CD8-positive, alpha-beta memory T cell (primary cell): ENCODE measurements at regions of chr10 and their contacts with region 1.

Region 1: DNA sequence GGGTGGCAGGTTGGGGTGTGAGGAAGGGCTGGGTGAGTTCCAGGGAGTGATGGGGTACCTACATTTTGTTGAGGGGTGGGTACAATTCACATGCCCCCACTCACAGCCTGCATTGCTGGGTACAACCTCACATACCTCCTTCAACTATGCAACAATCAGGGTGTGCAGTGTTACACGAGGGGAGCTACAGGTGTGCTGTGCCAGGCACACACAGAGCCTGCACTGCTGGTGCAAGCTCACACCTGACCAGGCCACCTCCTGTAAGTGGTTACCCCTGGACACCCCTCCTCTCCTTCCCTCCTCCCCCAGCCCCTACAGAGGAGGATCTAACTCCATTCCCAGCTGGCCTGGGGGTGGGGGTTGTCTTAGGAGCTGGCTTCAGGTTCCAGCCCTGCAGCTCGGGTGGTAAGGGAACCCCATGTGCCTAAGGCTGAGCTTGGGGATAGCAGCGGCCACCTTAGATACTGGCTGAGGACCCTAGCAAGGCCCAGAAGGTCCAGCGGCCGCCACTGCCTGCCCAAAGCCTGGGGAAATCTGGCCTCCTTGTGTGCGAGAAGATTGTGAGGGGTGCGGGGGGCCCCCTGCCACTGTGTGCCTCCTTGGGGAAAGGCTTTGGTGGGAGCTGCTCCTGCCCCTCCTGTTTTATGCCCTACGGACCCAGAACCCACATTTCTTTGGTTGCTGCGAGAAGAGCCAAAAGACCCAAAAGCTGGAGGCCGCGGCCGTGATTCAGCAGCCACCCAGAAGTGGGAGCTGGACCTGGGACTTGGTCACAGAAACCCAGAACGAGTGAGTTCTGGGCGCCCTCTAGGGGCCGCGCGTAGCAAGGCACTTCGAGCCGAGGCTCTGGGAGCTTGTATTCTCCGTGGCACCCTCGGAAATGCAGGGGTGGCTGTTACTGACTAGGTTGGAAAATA is 10.8 kb downstream of the TLX1 start:
- DNase-seq: peak; percentile 65 to 81 (median 70)
- H3K4me3 ChIP-seq: no peak overlapping the region
- H3K4me3 Mint-ChIP-seq: peak overlapping the region in 2 of 7 donors; percentile 7 to 28
- H3K27ac ChIP-seq: no peak overlapping the region
- H3K27ac Mint-ChIP-seq: peak overlapping the region in 2 of 8 donors; percentile 28 to 44
- H3K4me1 ChIP-seq: peaks cover 9% of the 10 kb centered on the region
- H3K4me1 Mint-ChIP-seq: peaks cover 24 to 49% (median 25%) of the 10 kb centered on the region in 3 donors
- H3K27me3 ChIP-seq: peaks cover 71% of the 10 kb centered on the region
- H3K27me3 Mint-ChIP-seq: peaks cover 73 to 85% of the 10 kb centered on the region in 2 donors

Region 2: DNA sequence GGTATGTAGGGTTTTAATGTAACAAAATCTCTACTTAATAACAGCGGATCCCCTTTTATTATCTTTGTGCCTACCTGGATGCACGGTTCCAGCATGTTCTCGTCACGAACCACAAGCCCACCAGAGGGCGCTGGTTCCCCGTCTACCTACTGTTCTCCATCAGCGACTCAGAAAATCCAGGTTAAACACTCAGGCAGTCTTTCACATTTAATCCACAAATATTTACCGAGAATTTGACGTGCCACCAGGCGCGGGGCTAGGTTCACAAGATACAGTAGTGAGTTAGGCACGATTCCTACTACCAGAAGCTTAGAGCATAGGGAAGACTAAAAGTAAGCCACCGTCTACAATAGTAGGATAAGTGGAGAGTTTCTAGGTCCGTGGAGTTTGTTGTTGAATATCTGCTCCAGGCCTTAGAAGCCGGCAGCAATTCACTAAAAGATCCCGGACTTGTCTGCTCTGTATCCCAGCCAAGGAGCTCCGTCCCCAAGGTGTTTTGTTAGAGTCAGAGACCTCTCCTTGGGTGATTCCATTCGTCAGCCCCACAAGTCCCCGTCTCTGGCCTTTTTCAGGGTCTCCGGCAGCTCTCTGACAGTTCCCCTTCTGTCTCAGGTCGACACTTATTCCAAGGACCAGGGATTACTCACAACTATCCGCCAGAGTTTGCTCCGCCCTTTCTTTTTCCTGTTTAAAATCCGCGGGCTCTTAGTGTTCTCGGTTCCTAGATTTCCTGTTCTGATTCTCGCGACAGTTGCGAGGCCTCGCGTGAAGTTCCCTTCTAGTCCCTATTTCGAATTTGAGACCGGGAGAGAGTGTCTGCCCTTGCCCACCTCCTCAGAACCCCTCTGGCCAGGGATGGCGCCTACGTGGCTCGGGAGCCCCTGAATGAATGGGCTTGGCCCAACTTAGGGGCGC is 81.6 kb before region 1 on chr10:
- CTCF ChIA-PET with region 1: interaction called, 18 read pairs
- POLR2A ChIA-PET with region 1: no interaction called
- DNase-seq: peak; percentile 83 to 96 (median 92)
- H3K4me3 ChIP-seq: peak overlapping the region; percentile 95
- H3K4me3 Mint-ChIP-seq: peak overlapping the region; percentile 89 to 99 (median 96)
- H3K27ac ChIP-seq: peak overlapping the region; percentile 77
- H3K27ac Mint-ChIP-seq: peak overlapping the region; percentile 89 to 98 (median 94)
- H3K4me1 ChIP-seq: peaks cover 23% of the 10 kb centered on the region
- H3K4me1 Mint-ChIP-seq: peaks cover 20 to 34% (median 22%) of the 10 kb centered on the region in 3 donors
- H3K27me3 ChIP-seq: peaks cover 26% of the 10 kb centered on the region
- H3K27me3 Mint-ChIP-seq: peaks cover 18 to 24% of the 10 kb centered on the region in 2 donors

Region 3: DNA sequence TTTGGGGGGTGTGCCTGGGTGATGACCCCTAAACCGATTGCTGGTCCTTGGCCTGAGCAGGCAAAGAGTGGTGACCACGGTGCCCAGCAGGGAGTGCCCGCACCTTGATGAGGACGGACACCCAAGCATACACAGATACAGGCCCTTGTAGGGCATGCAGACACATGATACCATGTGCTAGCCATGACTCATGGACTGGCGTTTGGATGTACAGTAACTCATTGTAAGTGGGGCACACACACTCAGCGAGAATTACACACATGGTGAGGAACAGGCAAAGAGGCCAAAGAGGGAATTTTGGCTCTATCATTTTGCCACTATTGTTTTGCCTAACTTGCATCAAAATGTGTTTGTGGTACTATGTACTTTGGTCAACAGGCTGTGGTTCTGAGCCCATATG is 56.0 kb before region 1 on chr10:
- CTCF ChIA-PET with region 1: interaction called, 287 read pairs
- POLR2A ChIA-PET with region 1: no interaction called
- DNase-seq: no peak
- H3K4me3 ChIP-seq: no peak overlapping the region
- H3K4me3 Mint-ChIP-seq: no peak overlapping the region
- H3K27ac ChIP-seq: no peak overlapping the region
- H3K27ac Mint-ChIP-seq: no peak overlapping the region
- H3K4me1 ChIP-seq: no peaks in the 10 kb centered on the region
- H3K4me1 Mint-ChIP-seq: no peaks in the 10 kb centered on the region
- H3K27me3 ChIP-seq: peaks cover 3% of the 10 kb centered on the region
- H3K27me3 Mint-ChIP-seq: peaks cover 37 to 79% of the 10 kb centered on the region in 2 donors

Region 4: DNA sequence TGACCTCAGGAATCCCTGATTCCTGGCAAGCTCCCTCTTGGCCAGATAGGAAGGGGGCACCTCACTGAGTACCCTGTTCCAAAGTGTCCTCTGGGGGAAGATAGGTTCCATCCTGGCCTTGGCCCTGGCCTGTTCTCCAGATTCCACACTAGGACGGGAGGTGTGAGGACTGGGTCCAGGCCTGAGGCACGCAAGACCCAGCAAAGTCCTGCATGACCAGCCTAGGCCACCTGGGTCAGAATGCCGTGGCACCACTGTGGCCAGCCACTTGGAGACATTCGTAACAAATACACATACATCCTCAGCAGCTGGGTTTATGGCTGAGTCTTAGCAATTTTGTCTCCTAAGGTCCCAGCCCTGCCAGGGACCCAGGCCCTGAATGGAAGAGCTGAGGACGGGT is 34.1 kb before region 1 on chr10:
- CTCF ChIA-PET with region 1: interaction called, 287 read pairs
- POLR2A ChIA-PET with region 1: no interaction called
- DNase-seq: no peak
- H3K4me3 ChIP-seq: no peak overlapping the region
- H3K4me3 Mint-ChIP-seq: no peak overlapping the region
- H3K27ac ChIP-seq: no peak overlapping the region
- H3K27ac Mint-ChIP-seq: no peak overlapping the region
- H3K4me1 ChIP-seq: no peaks in the 10 kb centered on the region
- H3K4me1 Mint-ChIP-seq: no peaks in the 10 kb centered on the region
- H3K27me3 ChIP-seq: no peaks in the 10 kb centered on the region
- H3K27me3 Mint-ChIP-seq: peaks cover 19 to 49% of the 10 kb centered on the region in 2 donors

Region 5: GRCh38 chr10:101130984-101131961 is 10.6 kb before region 1 on chr10 and contains the start of gene TLX1:
- CTCF ChIA-PET with region 1: interaction called, 14 read pairs
- POLR2A ChIA-PET with region 1: no interaction called
- DNase-seq: no peak
- H3K4me3 ChIP-seq: peak within 1 kb of the TSS; percentile 28
- H3K4me3 Mint-ChIP-seq: peak within 1 kb of the TSS; percentile 41 to 82 (median 63)
- H3K27ac ChIP-seq: no peak within 1 kb of the TSS
- H3K27ac Mint-ChIP-seq: no peak within 1 kb of the TSS
- H3K4me1 ChIP-seq: peaks cover 13% of the 10 kb centered on the region
- H3K4me1 Mint-ChIP-seq: peaks cover 23 to 44% (median 24%) of the 10 kb centered on the region in 3 donors
- H3K27me3 ChIP-seq: peaks cover 79% of the 10 kb centered on the region
- H3K27me3 Mint-ChIP-seq: peaks cover 58 to 86% of the 10 kb centered on the region in 2 donors
- total RNA-seq, gene TLX1: not detected

Region 6: DNA sequence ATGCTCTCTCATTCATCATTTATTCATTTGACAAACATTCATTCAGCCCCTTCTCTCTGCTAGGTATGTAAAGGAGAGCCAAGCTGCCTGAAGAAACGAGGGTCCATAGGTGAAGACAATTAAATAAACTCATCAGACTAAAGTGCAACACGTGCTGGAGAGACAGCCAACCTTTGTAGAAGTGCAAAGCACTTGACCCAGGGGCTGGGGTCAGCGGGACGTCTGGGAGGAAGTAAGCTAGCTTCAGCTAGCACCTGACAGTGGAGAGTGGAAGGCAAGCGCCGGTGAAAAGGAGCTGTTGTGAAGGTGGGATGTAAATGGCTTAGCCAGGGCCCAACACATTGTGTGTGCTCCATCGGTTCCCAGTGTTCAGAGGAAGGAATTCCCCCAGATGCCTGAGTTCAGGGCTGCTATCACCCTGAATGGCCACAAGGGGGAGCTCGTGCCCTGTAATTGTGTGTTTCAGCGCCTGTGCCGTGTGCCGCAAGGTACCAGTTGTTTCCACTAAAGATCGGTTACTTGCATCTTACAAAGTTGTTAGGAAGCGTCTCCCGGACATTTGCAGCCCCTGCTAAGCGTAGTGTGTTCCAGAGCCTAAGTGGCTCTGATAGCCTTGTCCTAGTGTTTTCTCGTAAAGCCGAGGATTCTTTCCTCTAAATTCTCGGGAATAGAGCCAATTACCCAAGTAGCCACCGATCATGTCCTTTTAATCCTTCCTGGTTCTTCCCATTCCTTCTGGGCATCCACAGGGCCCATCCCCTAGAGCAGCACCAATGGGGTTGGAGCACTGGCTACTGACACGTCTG is 19.8 kb after region 1 on chr10:
- CTCF ChIA-PET with region 1: interaction called, 24 read pairs
- POLR2A ChIA-PET with region 1: no interaction called
- DNase-seq: peak; percentile 55 to 79 (median 61)
- H3K4me3 ChIP-seq: no peak overlapping the region
- H3K4me3 Mint-ChIP-seq: peak overlapping the region in 2 of 7 donors; percentile 29
- H3K27ac ChIP-seq: no peak overlapping the region
- H3K27ac Mint-ChIP-seq: no peak overlapping the region
- H3K4me1 ChIP-seq: no peaks in the 10 kb centered on the region
- H3K4me1 Mint-ChIP-seq: peaks cover 7 to 11% (median 8%) of the 10 kb centered on the region in 3 donors
- H3K27me3 ChIP-seq: peaks cover 20% of the 10 kb centered on the region
- H3K27me3 Mint-ChIP-seq: peaks cover 53 to 87% of the 10 kb centered on the region in 2 donors

Region 7: DNA sequence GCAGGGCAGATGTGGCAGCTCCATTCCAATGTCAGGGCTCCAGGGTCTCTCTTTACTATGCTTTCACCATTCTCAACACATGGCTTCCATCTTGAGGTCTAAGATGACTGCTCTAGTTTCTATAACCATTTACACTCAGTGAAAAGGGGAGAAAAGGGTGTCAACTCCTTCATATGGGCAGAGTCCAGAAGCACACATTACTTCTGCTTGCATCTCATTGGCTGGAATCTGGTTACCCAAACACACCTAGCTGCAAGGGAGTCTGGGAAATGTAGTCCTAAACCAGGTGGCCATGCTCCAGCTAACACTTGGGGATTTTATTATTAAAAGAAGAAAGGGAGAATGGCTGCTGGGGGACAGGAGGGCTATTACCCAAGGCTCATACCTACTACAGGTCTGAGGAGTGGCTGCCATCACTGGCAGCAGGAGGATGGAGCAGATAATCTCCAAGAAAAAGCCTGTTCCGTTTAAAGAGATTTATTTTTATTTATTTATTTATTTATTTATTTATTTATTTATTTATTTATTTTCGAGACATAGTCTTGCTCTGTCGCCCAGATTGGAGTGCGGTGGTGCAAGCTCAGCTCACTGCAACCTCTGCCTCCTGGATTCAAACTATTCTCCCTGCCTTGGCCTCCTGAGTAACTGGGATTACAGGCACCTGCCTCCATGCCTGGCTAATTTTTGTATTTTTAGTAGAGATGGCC is 116.5 kb after region 1 on chr10:
- CTCF ChIA-PET with region 1: no interaction called
- POLR2A ChIA-PET with region 1: no interaction called
- DNase-seq: no peak
- H3K4me3 ChIP-seq: no peak overlapping the region
- H3K4me3 Mint-ChIP-seq: no peak overlapping the region
- H3K27ac ChIP-seq: no peak overlapping the region
- H3K27ac Mint-ChIP-seq: no peak overlapping the region
- H3K4me1 ChIP-seq: no peaks in the 10 kb centered on the region
- H3K4me1 Mint-ChIP-seq: no peaks in the 10 kb centered on the region
- H3K27me3 ChIP-seq: peaks cover 19% of the 10 kb centered on the region
- H3K27me3 Mint-ChIP-seq: peaks cover 43 to 64% of the 10 kb centered on the region in 2 donors